ENCODE measurements at regions of chr6 and their contacts with region 1.

Region 1: DNA sequence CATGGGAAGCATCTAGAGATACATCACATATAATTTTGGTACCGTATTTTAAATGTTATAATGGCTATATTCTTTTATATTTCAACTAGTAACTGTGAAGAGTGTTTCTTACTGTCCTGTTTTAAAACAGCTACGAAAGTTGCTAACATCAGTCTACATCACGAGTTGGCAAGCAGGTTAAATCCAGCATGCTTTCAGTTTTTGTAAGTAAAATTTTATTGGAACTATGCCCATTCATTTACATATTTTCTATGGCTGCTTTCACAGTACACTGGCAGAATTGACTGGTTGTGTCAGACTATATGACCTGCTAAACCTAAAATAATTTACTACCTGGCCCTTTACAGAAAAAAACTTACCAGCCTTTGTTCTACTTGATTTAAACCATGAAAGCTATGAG is 478.1 kb downstream of the PHF3 start:
- DNase-seq: no peak
- ATAC-seq: no peak

Region 2: GRCh38 chr6:63705707-63706106 is 408.0 kb before region 1 on chr6:
- intact Hi-C with region 1: no loop called
- DNase-seq: no peak
- ATAC-seq: no peak

Region 3: GRCh38 chr6:64074981-64075380 is 38.7 kb before region 1 on chr6:
- intact Hi-C with region 1: loop called in 1 of 2 experiments (anchors 2 kb)
- DNase-seq: no peak
- ATAC-seq: no peak